ENCODE measurements at regions of chr12 and their contacts with region 1.

Region 1: GRCh38 chr12:47949441-47950308 is 13.7 kb upstream of the TMEM106C start:
- DNase-seq: peak; percentile 79 to 84
- ATAC-seq: peak; percentile 85 to 96 (median 88)
- H3K4me3 ChIP-seq: no peak overlapping the region
- H3K27ac ChIP-seq: no peak overlapping the region
- H3K4me1 ChIP-seq: no peaks in the 10 kb centered on the region
- H3K27me3 ChIP-seq: no peaks in the 10 kb centered on the region
- CTCF ChIP-seq: peak; percentile 75

Region 2: DNA sequence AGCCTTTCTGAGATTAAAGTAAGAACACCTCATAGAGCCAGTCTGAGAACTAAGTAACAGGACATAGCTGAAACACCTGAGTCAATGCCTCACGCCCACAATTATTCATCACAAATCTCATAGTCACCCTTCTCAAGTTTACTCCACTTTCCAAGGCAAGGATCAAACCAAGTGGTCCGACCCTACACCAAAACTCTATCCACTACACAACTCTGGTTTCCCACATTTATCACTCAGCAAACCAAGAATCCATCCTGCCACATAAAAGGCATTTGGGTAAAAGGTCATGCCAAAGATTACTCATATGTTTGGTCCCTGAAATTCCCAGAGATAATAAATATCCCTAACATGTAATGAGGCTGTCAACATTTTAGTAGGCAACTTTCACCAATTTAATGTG is 387.9 kb before region 1 on chr12:
- intact Hi-C with region 1: no loop called
- DNase-seq: no peak
- ATAC-seq: no peak
- H3K4me3 ChIP-seq: no peak overlapping the region
- H3K27ac ChIP-seq: no peak overlapping the region
- H3K4me1 ChIP-seq: no peaks in the 10 kb centered on the region
- H3K27me3 ChIP-seq: no peaks in the 10 kb centered on the region
- CTCF ChIP-seq: no peak

Region 3: GRCh38 chr12:47870175-47870781 is 79.4 kb before region 1 on chr12:
- intact Hi-C with region 1: loop called in 1 of 2 experiments (anchors 5 kb)
- DNase-seq: peak; percentile 73 to 82
- ATAC-seq: peak; percentile 91 to 95 (median 92)
- H3K4me3 ChIP-seq: no peak overlapping the region
- H3K27ac ChIP-seq: peak overlapping the region; percentile 74
- H3K4me1 ChIP-seq: peaks cover 18% of the 10 kb centered on the region
- H3K27me3 ChIP-seq: no peaks in the 10 kb centered on the region
- CTCF ChIP-seq: peak; percentile 27

Region 4: DNA sequence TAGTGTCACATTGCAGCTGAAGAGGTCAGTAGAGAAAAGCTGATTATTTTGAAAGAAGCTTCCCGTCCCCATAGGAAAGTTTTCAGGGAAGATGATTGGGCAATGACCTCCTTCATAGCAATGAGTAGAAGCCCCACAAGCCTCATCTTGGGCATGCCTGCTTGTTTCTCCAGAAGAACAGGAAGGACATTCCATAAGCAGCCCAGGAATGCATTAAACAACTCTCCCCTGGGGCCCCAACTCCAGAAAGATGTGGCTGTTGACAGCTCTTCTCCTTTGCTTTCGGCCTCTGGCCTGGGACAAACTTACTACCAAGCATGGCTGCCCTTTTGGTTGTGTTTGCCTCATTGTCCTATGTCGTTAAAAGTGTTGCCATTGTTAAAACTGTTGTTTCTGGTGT is 39.2 kb before region 1 on chr12:
- intact Hi-C with region 1: loop called in 1 of 2 experiments (anchors 2 kb)
- DNase-seq: no peak
- ATAC-seq: no peak
- H3K4me3 ChIP-seq: no peak overlapping the region
- H3K27ac ChIP-seq: no peak overlapping the region
- H3K4me1 ChIP-seq: peaks cover 1% of the 10 kb centered on the region
- H3K27me3 ChIP-seq: no peaks in the 10 kb centered on the region
- CTCF ChIP-seq: no peak

Measured in psoas muscle (tissue), 8 donors.